ENCODE measurements at regions of chr2 and their contacts with region 1.

Region 1: DNA sequence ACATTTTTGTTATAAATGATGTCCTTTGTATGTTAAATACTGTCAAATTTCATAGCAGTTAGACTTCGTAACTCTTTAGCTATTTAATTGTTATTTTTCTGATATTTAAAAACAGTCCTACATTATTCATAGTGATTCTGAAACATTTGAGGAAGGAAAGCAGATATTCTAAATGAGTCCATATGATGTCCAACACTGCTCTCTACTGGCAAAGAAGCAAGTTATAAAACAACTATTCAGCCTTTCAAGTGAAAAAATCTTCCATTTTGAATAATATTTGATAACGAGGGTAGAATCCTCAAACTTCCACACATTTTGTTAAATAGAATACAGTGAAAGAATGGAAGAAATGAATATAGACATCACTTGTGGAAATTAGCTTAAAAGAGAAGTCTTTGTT is 220.8 kb downstream of the GULP1 start:
- DNase-seq: no peak
- H3K4me3 Mint-ChIP-seq: no peak overlapping the region
- H3K27ac Mint-ChIP-seq: no peak overlapping the region
- H3K4me1 Mint-ChIP-seq: peaks cover 17% of the 10 kb centered on the region
- H3K27me3 Mint-ChIP-seq: no peaks in the 10 kb centered on the region
- CTCF ChIP-seq: no peak

Region 2: DNA sequence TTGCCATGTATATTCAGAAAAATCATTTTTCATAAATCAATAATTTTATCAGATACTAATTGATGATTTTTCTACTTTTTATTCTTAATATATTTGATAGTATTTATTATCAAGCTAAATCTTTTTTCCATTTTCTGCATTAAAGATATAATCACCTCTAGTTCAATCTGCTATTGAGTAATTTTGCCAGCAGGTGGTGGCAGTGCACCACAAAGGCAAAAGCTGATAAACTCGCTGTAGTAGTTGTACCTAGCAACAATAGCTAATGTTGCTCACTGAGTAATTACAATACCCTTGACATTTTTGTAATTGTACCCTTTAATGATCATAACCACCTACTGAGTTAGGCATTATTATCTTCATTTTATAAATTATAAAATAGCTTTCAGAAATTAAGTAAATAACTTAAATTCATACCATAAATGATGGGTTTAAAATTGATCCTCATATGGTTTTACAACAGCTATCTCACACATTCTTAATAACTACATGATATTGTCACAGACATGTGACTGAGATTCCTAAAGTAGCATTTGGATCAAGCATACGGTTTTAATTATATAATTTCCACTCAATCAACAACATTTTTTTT is 1012.4 kb before region 1 on chr2:
- CTCF ChIA-PET with region 1: no interaction called
- intact Hi-C with region 1: loop called (anchors 2 kb)
- DNase-seq: peak; percentile 72
- H3K4me3 Mint-ChIP-seq: no peak overlapping the region
- H3K27ac Mint-ChIP-seq: no peak overlapping the region
- H3K4me1 Mint-ChIP-seq: peaks cover 39% of the 10 kb centered on the region
- H3K27me3 Mint-ChIP-seq: no peaks in the 10 kb centered on the region
- CTCF ChIP-seq: peak; percentile 84

Region 3: GRCh38 chr2:187594801-187595200 is 917.7 kb before region 1 on chr2:
- CTCF ChIA-PET with region 1: no interaction called
- intact Hi-C with region 1: loop called (anchors 5 kb)
- DNase-seq: no peak
- H3K4me3 Mint-ChIP-seq: no peak overlapping the region
- H3K27ac Mint-ChIP-seq: no peak overlapping the region
- H3K4me1 Mint-ChIP-seq: no peaks in the 10 kb centered on the region
- H3K27me3 Mint-ChIP-seq: no peaks in the 10 kb centered on the region
- CTCF ChIP-seq: no peak

Region 4: GRCh38 chr2:187971893-187972292 is 540.6 kb before region 1 on chr2:
- CTCF ChIA-PET with region 1: no interaction called
- intact Hi-C with region 1: loop called (anchors 5 kb)
- DNase-seq: no peak
- H3K4me3 Mint-ChIP-seq: no peak overlapping the region
- H3K27ac Mint-ChIP-seq: no peak overlapping the region
- H3K4me1 Mint-ChIP-seq: no peaks in the 10 kb centered on the region
- H3K27me3 Mint-ChIP-seq: no peaks in the 10 kb centered on the region
- CTCF ChIP-seq: no peak

Region 5: GRCh38 chr2:188199716-188200131 is 312.7 kb before region 1 on chr2:
- CTCF ChIA-PET with region 1: no interaction called
- intact Hi-C with region 1: loop called (anchors 5 kb)
- DNase-seq: no peak
- H3K4me3 Mint-ChIP-seq: no peak overlapping the region
- H3K27ac Mint-ChIP-seq: no peak overlapping the region
- H3K4me1 Mint-ChIP-seq: peaks cover 9% of the 10 kb centered on the region
- H3K27me3 Mint-ChIP-seq: no peaks in the 10 kb centered on the region
- CTCF ChIP-seq: no peak

Region 6: GRCh38 chr2:188381614-188382013 is 130.8 kb before region 1 on chr2:
- CTCF ChIA-PET with region 1: no interaction called
- intact Hi-C with region 1: loop called (anchors 5 kb)
- DNase-seq: no peak
- H3K4me3 Mint-ChIP-seq: peak overlapping the region; percentile 60
- H3K27ac Mint-ChIP-seq: peak overlapping the region; percentile 87
- H3K4me1 Mint-ChIP-seq: peaks cover 46% of the 10 kb centered on the region
- H3K27me3 Mint-ChIP-seq: no peaks in the 10 kb centered on the region
- CTCF ChIP-seq: no peak

Region 7: GRCh38 chr2:188631037-188631809 is 118.8 kb after region 1 on chr2:
- CTCF ChIA-PET with region 1: no interaction called
- intact Hi-C with region 1: no loop called
- DNase-seq: no peak
- H3K4me3 Mint-ChIP-seq: no peak overlapping the region
- H3K27ac Mint-ChIP-seq: no peak overlapping the region
- H3K4me1 Mint-ChIP-seq: no peaks in the 10 kb centered on the region
- H3K27me3 Mint-ChIP-seq: no peaks in the 10 kb centered on the region
- CTCF ChIP-seq: no peak

Region 8: DNA sequence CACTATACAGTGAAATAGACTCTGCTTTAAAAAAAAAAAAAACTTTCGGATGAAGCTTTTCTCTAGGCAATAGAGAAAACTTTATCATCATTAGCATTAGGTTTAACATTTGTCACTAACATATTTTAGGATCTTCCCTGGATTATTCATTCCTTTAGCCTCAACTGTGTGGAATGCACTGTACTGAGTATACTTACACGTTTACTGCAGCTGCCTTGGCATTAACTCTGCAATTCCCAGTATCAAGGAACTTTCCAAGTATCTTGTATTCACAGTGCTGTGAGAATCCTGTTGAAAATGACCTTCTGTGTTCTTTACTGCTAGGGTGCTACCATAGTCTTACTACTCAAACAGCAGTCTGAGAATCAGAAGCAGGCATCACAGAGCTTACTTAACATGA is 133.5 kb after region 1 on chr2:
- CTCF ChIA-PET with region 1: no interaction called
- intact Hi-C with region 1: no loop called
- DNase-seq: no peak
- H3K4me3 Mint-ChIP-seq: no peak overlapping the region
- H3K27ac Mint-ChIP-seq: no peak overlapping the region
- H3K4me1 Mint-ChIP-seq: no peaks in the 10 kb centered on the region
- H3K27me3 Mint-ChIP-seq: no peaks in the 10 kb centered on the region
- CTCF ChIP-seq: no peak

Region 9: GRCh38 chr2:188668017-188668680 is 155.7 kb after region 1 on chr2:
- CTCF ChIA-PET with region 1: no interaction called
- intact Hi-C with region 1: no loop called
- DNase-seq: peak; percentile 2
- H3K4me3 Mint-ChIP-seq: no peak overlapping the region
- H3K27ac Mint-ChIP-seq: no peak overlapping the region
- H3K4me1 Mint-ChIP-seq: peaks cover 12% of the 10 kb centered on the region
- H3K27me3 Mint-ChIP-seq: no peaks in the 10 kb centered on the region
- CTCF ChIP-seq: no peak

Measured in Calu3 (cell line).